Head of caudate nucleus (tissue), 42 donors: ENCODE measurements at regions of chr20 and their contacts with region 1.

Region 1: DNA sequence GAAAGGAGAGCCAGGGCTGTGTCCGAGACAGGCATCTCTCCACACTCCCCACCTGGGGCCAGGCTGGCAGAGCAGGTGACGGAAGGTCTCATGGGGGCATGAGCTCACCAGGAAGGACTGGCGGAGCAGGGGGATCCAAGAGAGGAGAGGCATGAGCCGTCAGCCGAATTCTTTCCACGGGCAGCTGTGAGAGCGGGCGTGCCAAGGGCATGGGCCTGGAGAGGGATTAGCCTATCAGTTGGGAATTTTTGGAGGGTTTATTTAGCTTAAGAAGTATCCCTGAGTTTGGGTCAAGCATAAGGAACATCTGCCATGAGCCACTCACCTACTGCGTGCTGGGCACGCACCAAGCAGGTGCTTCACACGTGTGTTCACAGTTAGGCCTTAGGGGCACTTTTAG is 60.2 kb upstream of the ZNFX1 start:
- DNase-seq: no peak

Region 2: DNA sequence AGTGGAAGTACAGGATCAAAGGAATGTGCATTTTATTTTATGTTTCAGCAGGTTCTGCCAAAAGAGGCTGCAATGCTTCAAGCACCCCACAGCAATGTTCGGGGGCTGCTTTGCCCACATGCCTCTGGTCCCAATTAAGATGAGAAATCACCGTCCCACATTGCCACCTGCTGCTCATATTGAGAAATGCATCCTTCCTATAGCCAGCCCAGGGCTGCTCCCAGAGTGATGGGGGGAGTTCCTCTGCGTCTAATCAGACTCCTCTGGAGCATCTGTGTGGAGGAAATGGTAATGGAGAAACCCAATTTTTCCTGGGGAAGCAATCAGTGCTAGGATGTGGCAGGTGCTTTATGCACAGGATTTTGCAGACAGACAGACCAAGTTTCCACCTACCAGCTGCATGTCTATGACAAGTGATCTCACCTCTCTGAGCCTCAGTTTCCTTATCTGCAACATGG is 196.2 kb after region 1 on chr20:
- intact Hi-C with region 1: loop called (anchors 10 kb)
- DNase-seq: peak in 41 of 42 donors; percentile 28 to 86 (median 66)